Left colon (tissue), 2 donors: ENCODE measurements at regions of chr17 and their contacts with region 1.

Region 1: DNA sequence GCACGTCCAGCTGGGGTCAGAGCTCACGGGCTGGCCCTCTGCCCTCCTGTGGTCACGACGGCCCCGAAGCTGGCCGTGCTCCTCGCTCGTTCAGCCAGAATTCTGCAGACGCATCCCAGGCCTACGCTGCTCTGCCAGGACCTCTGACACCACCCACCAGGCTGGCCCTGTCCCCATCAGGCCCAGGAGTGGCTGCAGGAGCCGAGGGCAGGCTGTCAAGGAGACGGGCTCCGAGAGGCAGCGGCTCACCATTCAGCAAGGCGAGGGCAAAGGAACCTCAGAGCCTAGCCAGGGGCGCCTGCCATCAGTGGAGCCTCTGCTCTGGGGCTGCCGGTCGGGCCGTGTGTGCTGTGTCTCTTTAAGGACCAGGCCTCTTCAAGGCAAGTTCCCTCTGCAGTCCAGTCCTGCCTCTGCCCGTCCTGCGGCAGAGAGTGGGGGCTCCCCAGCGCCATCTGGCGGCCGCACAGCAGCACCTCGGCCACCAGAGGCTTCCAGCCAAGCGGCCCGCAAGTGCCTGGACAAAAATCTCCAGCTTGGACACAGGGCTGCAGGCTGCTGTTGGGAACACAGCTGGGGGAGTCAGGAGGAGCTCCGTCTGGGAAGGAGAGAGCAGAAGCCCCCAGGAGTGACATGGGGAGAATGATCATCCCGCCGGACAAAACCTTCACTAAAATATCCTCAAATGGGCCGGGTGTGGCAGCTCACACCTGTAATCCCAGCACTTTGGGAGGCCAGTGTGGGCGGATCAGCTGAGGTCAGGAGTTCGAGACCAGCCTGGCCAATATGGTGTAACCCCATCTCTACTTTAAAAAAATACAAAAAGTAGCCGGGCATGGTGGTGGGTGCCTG is 7.4 kb upstream of the ABR start:
- DNase-seq: peak; percentile 79
- ATAC-seq: peak; percentile 93

Region 2: DNA sequence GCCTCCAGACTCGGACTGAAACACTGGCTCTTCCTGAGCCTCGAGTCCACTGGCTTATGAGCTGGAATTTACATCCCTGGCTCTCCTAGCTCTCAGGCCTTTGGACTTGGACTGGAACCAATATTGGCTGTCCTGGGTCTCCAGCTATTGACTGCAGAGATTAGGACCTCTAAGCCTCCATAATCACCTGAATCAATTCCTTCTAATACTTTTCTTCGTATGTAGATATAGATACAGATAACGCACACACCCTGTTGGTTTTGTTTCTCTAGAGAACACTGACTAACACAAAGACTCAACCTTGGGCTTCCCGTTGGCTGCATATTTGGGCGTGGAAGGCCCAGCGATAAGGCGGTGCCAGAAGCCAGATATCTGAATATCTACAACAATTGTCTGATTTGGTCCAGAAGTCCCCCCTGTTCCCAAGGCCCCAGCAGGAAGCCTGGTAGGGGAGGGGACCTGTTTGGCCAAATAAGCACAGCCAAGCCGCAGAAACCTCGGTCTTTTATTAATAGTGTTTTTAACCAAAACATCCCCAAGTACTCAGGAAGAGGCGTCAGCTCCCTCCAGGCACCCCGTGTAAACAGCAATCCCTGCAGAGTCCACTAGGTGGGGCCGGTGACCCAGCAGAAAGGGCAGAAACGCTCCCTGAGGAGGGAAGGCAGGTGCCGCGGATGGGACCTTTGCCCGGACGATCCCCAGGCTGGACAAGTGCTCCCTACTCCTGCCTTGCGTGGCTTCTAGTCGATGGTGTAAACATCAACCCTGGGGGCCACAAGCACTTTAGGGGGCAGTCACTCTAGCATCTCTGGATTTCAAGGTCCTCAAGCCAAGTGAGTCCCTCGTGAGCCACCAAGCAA is 64.4 kb before region 1 on chr17:
- intact Hi-C with region 1: loop called (anchors 5 to 10 kb)
- DNase-seq: peak; percentile 83 to 92
- ATAC-seq: peak; percentile 91